Body of pancreas (tissue), 4 donors: ENCODE measurements at regions of chr3 and their contacts with region 1.

Region 1: GRCh38 chr3:112293368-112294321 is at the start of gene SLC9C1:
- DNase-seq: peak in 3 of 4 donors; percentile 27 to 67 (median 32)
- ATAC-seq: peak; percentile 83
- H3K4me3 ChIP-seq: peak within 1 kb of the TSS in 1 of 2 donors; percentile 7
- H3K27ac ChIP-seq: peak within 1 kb of the TSS in 3 of 4 donors; percentile 14 to 42 (median 36)
- H3K4me1 ChIP-seq: peaks cover 3% of the 10 kb centered on the region
- H3K27me3 ChIP-seq: no peaks in the 10 kb centered on the region
- CTCF ChIP-seq: peak; percentile 34 to 69 (median 66)
- POLR2A ChIP-seq: no peak
- total RNA-seq, gene SLC9C1: not detected

Region 2: GRCh38 chr3:112519424-112520001 is 225.9 kb after region 1 on chr3:
- intact Hi-C with region 1: loop called (anchors 5 kb)
- DNase-seq: peak in 3 of 4 donors; percentile 9 to 56 (median 15)
- ATAC-seq: peak; percentile 78
- H3K4me3 ChIP-seq: no peak overlapping the region
- H3K27ac ChIP-seq: no peak overlapping the region
- H3K4me1 ChIP-seq: no peaks in the 10 kb centered on the region
- H3K27me3 ChIP-seq: no peaks in the 10 kb centered on the region
- CTCF ChIP-seq: peak; percentile 17 to 73 (median 63)
- POLR2A ChIP-seq: no peak